Calu3 (cell line): ENCODE measurements at regions of chr14 and their contacts with region 1.

Region 1: DNA sequence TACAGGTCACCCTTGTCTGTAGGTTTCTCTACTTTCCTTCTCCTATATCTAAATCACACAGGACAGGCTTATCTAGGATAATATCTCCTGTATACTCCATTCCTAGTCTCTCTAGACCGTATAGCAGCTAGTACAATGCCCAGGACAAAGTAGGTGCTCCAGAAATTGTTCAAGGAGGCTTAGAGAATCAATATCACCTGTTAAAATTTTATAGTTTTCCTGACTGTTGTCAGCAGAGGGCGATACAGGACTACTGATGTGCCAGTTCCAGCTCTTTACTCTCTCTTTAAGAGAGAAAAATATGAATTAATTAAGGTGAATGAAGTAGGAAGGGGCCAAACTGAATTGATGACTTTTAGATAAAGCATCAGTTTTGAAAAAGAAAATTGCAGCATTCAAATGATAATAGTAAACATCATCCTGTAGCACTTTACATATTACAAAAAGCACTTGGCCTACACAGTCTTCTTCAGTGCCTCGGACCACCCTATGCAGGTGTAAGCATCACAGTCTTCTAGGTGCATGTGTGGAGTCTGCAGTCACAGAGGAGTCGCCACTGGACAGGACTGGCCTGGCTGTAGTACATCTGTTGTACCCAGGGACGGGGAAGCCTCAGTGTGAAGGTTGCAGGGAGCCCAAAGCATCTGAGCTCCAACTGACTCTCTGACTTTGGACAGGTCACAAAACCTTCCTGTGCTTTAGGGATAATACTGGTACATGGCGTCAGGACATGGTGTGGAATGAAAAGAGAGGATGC is 61.9 kb upstream of the MAX start:
- DNase-seq: peak; percentile 55
- H3K4me3 Mint-ChIP-seq: no peak overlapping the region
- H3K27ac Mint-ChIP-seq: no peak overlapping the region
- H3K4me1 Mint-ChIP-seq: peaks cover 19% of the 10 kb centered on the region
- H3K27me3 Mint-ChIP-seq: no peaks in the 10 kb centered on the region
- CTCF ChIP-seq: peak; percentile 46

Region 2: GRCh38 chr14:65604936-65605335 is 440.7 kb after region 1 on chr14:
- CTCF ChIA-PET with region 1: no interaction called
- intact Hi-C with region 1: loop called (anchors 10 kb)
- DNase-seq: no peak
- H3K4me3 Mint-ChIP-seq: no peak overlapping the region
- H3K27ac Mint-ChIP-seq: no peak overlapping the region
- H3K4me1 Mint-ChIP-seq: peaks cover 6% of the 10 kb centered on the region
- H3K27me3 Mint-ChIP-seq: no peaks in the 10 kb centered on the region
- CTCF ChIP-seq: no peak

Region 3: DNA sequence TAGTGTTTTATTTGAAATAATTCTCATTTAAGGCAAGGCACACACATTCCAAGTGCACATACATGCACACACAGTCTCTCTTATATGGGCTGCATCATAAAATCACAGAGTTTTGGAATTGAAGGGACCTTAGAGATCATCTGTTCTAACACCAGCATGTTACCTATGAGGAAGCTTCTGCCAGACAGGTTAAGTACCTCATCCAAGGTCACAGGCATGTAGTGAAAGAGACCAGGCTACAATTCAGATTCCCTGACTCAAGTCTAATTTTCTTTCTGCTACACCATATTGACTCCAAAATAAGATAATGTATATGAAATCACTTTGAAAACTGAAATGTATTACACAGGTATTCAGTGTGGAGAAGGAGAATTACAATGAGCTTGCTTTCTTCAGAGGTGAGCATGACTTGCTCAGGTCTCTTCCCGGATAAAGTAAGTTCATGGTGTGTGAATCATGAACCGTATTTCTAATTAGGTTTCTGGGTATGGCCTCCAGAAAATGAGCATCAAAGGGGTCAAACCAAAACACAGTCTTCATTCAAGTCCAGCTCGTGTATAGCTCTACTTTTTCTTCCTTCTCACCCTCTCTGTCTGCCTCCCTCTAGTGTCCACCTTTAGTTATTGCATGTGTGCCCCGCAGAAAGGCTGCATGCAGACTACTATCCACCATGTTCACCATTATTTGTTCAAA is 660.2 kb after region 1 on chr14:
- CTCF ChIA-PET with region 1: interaction called, 36 read pairs
- intact Hi-C with region 1: loop called (anchors 1 kb)
- DNase-seq: peak; percentile 67
- H3K4me3 Mint-ChIP-seq: no peak overlapping the region
- H3K27ac Mint-ChIP-seq: no peak overlapping the region
- H3K4me1 Mint-ChIP-seq: no peaks in the 10 kb centered on the region
- H3K27me3 Mint-ChIP-seq: peaks cover 38% of the 10 kb centered on the region
- CTCF ChIP-seq: peak; percentile 78